Activated CD8-positive, alpha-beta T cell treated with anti-CD3 and anti-CD28 coated beads for 36 hours (primary cell): ENCODE measurements at regions of chr5 and their contacts with region 1.

Region 1: DNA sequence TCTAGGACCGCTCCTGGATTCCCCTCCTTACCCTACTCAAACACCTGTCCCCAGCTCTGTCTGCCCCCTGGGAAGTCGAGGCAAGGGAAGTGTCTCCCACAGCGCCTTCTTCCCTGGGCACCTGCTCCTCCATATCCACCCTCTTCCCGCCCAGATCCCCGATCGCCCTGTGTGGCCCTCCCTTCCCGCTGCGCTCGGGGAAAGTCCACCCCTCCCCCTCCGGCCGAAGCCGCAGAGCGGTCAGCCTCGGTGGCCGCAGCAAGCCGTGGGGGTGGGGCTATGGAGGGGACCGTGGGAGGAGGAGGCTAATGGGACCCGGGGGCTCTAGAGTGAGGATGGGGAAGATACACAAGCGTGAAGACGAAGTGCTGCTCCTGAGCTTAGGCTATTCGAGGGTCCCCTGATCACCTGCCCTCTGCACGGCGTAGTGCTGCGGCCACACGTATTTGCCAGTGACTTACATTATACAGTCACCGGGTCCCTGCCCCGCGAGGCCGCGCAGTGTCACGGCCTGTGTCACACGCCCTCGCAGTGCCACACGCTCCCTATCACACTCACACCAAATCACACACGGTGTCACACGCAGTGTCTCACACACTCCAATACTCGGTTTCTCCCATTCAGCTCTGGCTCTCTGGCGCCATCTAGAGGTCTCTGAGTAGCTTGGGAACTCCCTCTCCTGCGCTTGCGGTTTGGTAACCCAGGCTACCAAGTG is 658 bp upstream of the PCDH1 start:
- DNase-seq: peak; percentile 94
- ATAC-seq: peak; percentile 82
- H3K4me3 Mint-ChIP-seq: peak overlapping the region; percentile 55
- H3K27ac Mint-ChIP-seq: no peak overlapping the region
- H3K4me1 Mint-ChIP-seq: peaks cover 17% of the 10 kb centered on the region
- H3K27me3 Mint-ChIP-seq: peaks cover 70% of the 10 kb centered on the region
- CTCF ChIP-seq: peak; percentile 98

Region 2: DNA sequence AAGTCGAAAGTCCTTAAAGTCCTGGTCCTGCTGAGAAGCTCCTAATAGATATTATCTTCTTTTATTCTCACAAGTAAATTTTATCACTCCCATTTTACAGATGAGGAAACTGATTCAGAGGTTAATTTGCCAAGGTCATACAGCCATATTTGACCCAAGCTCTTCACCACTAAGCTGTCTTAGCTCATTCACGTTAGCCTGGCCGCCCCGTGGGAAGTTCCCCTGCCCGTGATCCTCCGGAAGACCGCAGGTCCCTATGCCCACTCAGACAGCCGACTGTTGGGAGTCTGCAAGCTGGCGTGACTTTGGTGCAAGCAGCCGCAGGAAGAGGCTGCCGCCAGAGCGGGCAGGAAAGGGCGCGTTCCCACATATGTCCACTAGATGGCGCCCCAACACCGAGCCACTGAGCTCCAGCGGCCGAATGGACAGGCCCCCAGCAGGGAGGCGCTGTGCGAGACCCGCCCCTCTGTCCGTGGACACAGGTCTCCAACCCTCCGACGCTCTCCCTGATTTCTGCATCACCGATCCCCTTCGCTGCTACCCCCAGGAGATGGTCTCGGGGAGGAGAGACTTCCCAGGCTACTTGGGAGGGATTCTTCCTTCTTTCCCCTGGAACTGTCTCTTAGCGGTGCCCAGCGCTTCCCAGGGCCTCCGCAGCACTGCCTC is 186.9 kb before region 1 on chr5:
- CTCF ChIA-PET with region 1: interaction called, 205 read pairs
- POLR2A ChIA-PET with region 1: interaction called, 3 read pairs
- intact Hi-C with region 1: loop called (anchors 2 kb)
- DNase-seq: peak; percentile 90
- ATAC-seq: peak; percentile 81
- H3K4me3 Mint-ChIP-seq: peak overlapping the region; percentile 68
- H3K27ac Mint-ChIP-seq: peak overlapping the region; percentile 46
- H3K4me1 Mint-ChIP-seq: peaks cover 19% of the 10 kb centered on the region
- H3K27me3 Mint-ChIP-seq: peaks cover 9% of the 10 kb centered on the region
- CTCF ChIP-seq: peak; percentile 92

Region 3: DNA sequence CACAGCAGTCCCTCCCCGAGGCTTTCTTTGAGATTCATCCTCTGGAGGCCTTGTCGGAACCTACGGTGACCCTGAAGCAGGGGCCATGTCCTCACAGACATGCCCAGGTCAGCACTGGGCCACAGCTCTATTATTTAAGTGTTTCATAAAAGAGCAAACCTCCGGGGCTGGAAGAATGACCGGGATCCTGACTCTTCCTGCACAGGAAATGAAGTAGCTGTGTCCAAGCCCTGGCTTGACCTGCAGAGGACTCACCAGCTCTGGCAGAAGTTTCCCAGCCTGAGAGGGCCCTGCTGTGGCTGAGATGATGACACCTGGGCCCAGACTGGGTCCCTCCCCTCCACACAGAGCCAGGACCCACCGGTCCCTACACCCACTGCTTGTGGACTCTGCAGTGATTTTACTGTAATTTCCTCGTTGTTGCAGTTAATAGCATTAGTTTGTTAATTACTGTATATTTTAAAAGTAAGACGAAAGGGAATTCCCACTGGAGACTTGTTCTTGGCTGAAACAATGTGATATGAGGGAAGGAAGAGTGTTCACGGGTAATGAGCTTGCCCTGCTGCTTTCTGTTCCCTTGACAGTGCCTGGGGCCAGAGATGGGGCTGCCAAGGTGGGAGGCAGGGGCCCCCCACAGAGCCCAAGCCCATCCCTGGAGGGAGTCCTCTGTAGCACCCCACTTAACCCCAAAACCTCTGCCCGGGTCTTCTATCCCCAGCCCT is 72.8 kb before region 1 on chr5:
- CTCF ChIA-PET with region 1: interaction called, 19 read pairs
- POLR2A ChIA-PET with region 1: no interaction called
- intact Hi-C with region 1: no loop called
- DNase-seq: no peak
- ATAC-seq: no peak
- H3K4me3 Mint-ChIP-seq: no peak overlapping the region
- H3K27ac Mint-ChIP-seq: no peak overlapping the region
- H3K4me1 Mint-ChIP-seq: no peaks in the 10 kb centered on the region
- H3K27me3 Mint-ChIP-seq: peaks cover 42% of the 10 kb centered on the region
- CTCF ChIP-seq: no peak

Region 4: DNA sequence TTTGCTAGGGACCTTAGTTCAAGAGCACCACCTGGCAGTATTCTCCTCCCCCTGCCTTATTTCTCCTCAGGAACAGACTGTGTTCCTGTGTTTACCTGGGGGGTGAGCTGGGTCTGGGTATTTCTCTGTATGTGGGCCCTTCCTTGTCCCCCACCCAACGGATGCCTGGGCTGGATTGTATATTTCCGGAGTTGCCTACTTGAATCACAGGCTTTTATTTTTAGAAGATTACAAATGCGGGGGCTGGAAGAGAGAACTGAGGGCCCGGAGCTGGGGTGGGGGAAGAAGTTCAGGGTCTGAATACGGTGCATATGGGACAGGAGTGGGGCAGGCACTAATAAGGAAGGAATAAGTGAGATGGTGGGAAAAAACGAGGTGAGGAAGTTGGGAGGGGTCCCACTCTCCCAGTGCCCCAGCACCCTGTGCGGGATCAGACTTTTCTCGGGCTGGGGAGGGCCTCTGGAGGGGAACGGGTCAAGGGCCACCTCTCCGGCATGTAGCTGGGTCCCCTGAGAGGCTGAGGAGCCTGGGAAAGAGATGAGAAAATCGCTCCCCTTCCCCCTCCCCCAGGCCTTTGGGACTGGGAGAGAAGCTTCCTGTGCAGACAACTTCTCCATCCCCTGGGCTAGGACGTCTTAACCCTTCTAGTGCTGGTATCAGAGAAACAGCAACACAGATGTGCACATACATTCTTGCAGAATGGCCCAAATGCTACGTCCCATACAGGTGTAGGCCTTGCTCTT is 42.8 kb before region 1 on chr5:
- CTCF ChIA-PET with region 1: interaction called, 10 read pairs
- POLR2A ChIA-PET with region 1: interaction called, 3 read pairs
- intact Hi-C with region 1: no loop called
- DNase-seq: peak; percentile 38
- ATAC-seq: peak; percentile 75
- H3K4me3 Mint-ChIP-seq: peak overlapping the region; percentile 27
- H3K27ac Mint-ChIP-seq: peak overlapping the region; percentile 23
- H3K4me1 Mint-ChIP-seq: peaks cover 18% of the 10 kb centered on the region
- H3K27me3 Mint-ChIP-seq: peaks cover 3% of the 10 kb centered on the region
- CTCF ChIP-seq: no peak

Region 5: GRCh38 chr5:141866149-141867120 is 12.4 kb before region 1 on chr5:
- CTCF ChIA-PET with region 1: interaction called, 22 read pairs
- POLR2A ChIA-PET with region 1: interaction called, 3 read pairs
- intact Hi-C with region 1: no loop called
- DNase-seq: no peak
- ATAC-seq: no peak
- H3K4me3 Mint-ChIP-seq: no peak overlapping the region
- H3K27ac Mint-ChIP-seq: no peak overlapping the region
- H3K4me1 Mint-ChIP-seq: no peaks in the 10 kb centered on the region
- H3K27me3 Mint-ChIP-seq: peaks cover 10% of the 10 kb centered on the region
- CTCF ChIP-seq: no peak

Region 6: GRCh38 chr5:141914199-141914743 is 35.4 kb after region 1 on chr5:
- CTCF ChIA-PET with region 1: interaction called, 44 read pairs
- POLR2A ChIA-PET with region 1: interaction called, 5 read pairs
- intact Hi-C with region 1: no loop called
- DNase-seq: peak; percentile 36
- ATAC-seq: peak; percentile 81
- H3K4me3 Mint-ChIP-seq: peak overlapping the region; percentile 29
- H3K27ac Mint-ChIP-seq: no peak overlapping the region
- H3K4me1 Mint-ChIP-seq: peaks cover 11% of the 10 kb centered on the region
- H3K27me3 Mint-ChIP-seq: peaks cover 21% of the 10 kb centered on the region
- CTCF ChIP-seq: peak; percentile 1

Region 7: GRCh38 chr5:142000703-142001484 is 122.0 kb after region 1 on chr5:
- CTCF ChIA-PET with region 1: no interaction called
- POLR2A ChIA-PET with region 1: no interaction called
- intact Hi-C with region 1: no loop called
- DNase-seq: peak; percentile 49
- ATAC-seq: peak; percentile 56
- H3K4me3 Mint-ChIP-seq: no peak overlapping the region
- H3K27ac Mint-ChIP-seq: peak overlapping the region; percentile 88
- H3K4me1 Mint-ChIP-seq: peaks cover 44% of the 10 kb centered on the region
- H3K27me3 Mint-ChIP-seq: no peaks in the 10 kb centered on the region
- CTCF ChIP-seq: peak; percentile 51

Region 8: DNA sequence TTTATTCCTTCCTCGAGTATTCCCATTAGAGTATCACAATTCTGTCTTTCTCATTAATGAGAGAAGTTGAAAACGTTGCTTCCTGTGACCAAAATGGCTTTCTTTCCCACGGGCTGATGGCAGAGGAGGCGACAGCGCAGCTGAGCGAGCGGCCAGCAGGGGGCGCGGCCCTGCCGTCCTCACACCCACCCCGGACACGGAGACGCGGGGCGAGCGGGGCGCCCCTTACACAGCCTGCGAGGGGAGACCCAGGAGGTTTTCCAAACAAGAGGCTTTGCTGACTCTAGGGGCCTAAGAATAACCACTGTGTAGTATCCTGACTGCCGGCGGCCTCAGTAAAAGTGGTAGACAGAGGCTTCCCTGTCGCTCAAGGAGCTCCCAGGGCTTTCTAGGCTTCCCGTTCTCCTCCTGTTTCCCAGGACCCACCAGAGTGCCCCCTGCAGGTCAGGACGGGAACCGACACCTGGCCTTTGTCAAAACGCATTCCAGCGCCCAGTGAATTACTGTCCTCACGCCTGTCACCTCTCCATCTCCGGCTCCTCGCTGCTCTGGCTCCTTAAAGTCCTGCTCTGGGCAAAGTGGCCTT is 834.3 kb after region 1 on chr5:
- CTCF ChIA-PET with region 1: no interaction called
- POLR2A ChIA-PET with region 1: no interaction called
- intact Hi-C with region 1: no loop called
- DNase-seq: peak; percentile 92
- ATAC-seq: peak; percentile 97
- H3K4me3 Mint-ChIP-seq: peak overlapping the region; percentile 72
- H3K27ac Mint-ChIP-seq: peak overlapping the region; percentile 40
- H3K4me1 Mint-ChIP-seq: peaks cover 5% of the 10 kb centered on the region
- H3K27me3 Mint-ChIP-seq: no peaks in the 10 kb centered on the region
- CTCF ChIP-seq: peak; percentile 93